ENCODE measurements at regions of chr1 and their contacts with region 1.

Region 1: DNA sequence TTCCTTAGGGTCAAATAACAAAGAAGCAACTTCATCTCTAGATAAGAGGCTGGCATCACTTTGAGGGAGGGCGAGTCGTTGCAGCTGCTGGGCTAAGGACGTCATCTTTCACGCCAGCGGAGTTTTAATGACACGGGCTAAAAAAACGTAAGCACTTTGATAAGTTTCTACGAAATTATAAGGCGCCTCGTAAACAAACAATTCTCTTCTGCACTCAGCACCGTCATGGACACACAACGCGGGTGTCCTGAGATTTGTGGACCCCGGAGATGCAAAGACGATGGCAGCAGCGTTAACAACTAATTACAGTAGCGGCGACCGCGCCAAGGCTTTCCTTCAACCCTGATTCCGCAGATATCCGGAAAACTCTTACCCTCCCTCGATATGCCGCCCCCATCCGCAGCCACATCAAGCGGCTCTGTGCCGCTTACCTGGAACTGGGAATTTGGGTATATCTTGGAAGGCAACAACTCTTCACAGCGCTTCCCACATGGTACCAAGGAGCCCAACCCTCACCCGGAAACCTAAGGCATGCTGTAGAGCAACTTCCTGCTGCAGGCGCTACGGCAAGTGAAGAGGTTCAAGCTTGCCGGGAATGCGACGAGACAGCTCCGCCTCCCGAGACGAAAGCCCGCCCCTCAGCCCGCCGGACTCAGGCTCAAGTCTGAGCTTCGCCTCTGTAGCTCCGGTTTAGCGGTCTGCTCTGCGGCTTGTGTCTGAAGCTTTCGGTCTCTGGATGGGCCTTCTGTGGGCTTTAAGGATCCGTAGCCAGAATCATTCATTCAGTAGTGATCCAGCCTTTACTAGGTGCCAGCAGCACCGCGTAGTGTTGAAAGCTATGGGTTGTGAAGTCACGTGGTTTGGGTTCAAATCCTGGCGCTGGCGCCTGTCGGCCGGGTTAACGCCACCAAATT is at the start of gene HEATR1:
- DNase-seq: peak; percentile 86
- CTCF ChIP-seq: no peak

Region 2: DNA sequence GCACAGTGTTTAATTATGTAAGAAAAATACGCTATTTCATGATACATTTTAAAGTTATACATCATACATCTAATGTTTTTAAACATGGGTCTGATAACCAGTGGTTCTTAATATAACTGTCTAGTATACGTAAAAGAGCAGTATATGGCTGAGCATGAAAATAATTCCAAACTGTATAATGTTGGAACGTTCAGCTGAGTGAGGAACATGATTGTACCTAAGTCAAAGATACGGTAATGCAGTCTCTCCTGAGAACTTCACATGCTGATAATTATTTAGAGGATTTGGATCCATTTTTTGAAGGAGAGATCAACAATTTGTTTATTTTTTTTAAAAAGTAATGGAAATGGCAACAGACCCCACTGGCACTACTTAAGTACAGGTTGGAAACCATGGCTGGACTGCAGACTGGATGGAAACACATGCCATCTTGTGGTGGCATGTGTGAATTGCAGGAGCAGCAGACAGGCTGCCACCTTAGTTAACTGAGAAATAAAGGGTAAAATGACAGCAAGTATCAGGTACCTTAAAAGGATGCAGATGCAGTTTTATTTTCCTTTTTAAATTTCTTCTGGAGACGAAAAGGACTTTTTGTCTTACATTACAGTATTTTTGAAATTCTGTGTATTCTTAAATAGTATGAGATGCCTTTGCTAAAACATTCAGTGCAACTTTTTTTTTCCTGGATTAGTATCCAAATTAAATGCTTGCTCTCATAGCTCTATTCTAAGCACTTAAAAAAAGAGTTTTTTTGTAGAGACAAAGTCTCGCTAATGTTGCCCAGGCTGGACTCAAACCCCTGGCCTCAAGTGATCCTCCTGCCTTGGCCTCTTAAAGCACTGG is 264.6 kb after region 1 on chr1:
- in situ Hi-C with region 1: loop called (anchors 25 kb)
- DNase-seq: peak; percentile 42
- CTCF ChIP-seq: peak; percentile 94

Region 3: DNA sequence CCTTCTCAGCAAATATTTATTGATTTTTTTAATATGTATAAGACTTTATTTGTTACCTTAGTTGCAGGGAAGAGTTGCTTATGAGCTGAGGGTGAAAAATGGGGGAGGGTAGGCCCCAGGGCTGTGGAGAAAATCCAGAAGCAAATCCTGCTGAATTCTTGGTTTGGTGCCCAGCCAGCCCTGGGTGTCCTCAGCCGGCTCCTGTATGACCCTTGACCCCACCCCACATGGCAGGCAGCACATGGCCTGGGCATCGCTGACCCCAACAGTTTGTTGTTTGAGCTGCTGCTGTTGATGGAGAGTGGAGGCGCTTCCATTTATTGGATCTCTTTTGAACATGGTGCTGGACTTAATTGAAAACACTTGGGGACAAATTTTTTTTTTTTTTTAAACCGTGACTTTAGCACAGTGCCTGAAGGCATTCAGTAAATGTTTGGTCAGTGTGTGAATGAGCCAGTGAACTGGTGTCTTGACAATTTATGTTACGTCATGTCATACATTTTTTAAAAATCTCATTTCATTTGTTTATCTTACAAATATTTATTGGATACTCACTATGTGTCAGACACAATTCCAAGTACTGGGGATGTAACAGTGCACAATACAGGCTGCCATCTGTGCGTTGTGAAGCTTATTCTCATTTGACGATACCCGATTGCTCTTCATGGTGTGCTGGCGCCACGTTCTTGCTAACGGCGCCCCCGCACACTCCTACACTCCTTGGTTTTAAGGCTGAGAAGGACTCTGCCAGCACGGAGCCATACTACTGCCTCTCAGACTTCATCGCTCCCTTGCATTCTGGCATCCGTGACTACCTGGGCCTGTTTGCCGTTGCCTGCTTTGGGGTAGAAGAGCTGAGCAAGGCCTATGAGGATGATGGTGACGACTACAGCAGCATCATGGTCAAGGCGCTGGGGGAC is 289.6 kb after region 1 on chr1:
- in situ Hi-C with region 1: no loop called
- DNase-seq: no peak
- CTCF ChIP-seq: no peak

Region 4: GRCh38 chr1:237386362-237387143 is 782.3 kb after region 1 on chr1:
- in situ Hi-C with region 1: loop called (anchors 25 kb)
- DNase-seq: peak; percentile 34
- CTCF ChIP-seq: peak; percentile 53